Activated CD8-positive, alpha-beta T cell treated with anti-CD3 and anti-CD28 coated beads for 36 hours (primary cell): ENCODE measurements at regions of chr19 and their contacts with region 1.

Region 1: DNA sequence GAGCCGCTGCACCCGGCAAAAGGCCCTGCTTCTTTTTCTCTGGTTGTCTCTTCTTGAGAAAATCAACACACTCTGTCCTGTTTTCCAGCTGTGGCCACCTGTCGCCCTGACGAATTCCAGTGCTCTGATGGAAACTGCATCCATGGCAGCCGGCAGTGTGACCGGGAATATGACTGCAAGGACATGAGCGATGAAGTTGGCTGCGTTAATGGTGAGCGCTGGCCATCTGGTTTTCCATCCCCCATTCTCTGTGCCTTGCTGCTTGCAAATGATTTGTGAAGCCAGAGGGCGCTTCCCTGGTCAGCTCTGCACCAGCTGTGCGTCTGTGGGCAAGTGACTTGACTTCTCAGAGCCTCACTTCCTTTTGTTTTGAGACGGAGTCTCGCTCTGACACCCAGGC is 17.2 kb downstream of the LDLR start:
- DNase-seq: no peak
- ATAC-seq: no peak
- H3K4me3 Mint-ChIP-seq: no peak overlapping the region
- H3K27ac Mint-ChIP-seq: no peak overlapping the region
- H3K4me1 Mint-ChIP-seq: no peaks in the 10 kb centered on the region
- H3K27me3 Mint-ChIP-seq: no peaks in the 10 kb centered on the region
- CTCF ChIP-seq: no peak

Region 2: DNA sequence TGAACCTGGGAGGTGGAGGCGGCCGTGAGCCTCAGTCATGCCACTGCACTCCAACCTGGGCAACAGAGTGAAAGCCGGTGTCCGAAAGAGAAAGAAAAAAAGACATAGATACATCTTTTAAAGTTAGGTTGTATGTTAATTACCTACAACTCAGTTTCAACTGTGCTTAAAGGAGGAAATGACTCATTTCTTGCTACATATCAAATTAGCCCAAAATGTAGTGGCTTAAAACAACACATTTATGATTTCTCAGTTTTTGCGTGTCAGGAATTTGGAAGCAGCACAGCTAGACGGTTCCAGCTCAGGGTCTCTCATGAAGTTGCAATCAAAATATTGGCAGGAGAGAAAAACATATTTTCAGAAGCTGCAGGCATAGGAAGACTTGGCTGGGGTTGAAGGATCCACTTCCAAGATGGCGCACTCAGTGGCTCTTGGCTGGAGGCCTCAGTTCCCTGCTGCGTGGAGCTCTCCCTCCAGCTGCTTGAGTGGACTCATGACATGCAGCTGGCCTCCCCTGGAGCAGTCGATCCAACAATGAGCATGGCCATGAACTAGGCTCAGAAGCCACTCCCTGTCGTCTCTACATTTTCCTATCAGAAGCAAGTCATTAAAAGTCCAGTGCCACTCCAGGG is 10.2 kb before region 1 on chr19:
- CTCF ChIA-PET with region 1: no interaction called
- POLR2A ChIA-PET with region 1: interaction called, 20 read pairs
- intact Hi-C with region 1: no loop called
- DNase-seq: peak; percentile 57
- ATAC-seq: peak; percentile 55
- H3K4me3 Mint-ChIP-seq: peak overlapping the region; percentile 63
- H3K27ac Mint-ChIP-seq: peak overlapping the region; percentile 94
- H3K4me1 Mint-ChIP-seq: peaks cover 54% of the 10 kb centered on the region
- H3K27me3 Mint-ChIP-seq: no peaks in the 10 kb centered on the region
- CTCF ChIP-seq: no peak